HCT116 (cell line): ENCODE measurements at regions of chr10 and their contacts with region 1.

Region 1: GRCh38 chr10:89773081-89773480 is 71.7 kb downstream of the KIF20B start:
- DNase-seq: no peak
- ATAC-seq: no peak
- H3K4me3 ChIP-seq: no peak overlapping the region
- H3K27ac ChIP-seq: no peak overlapping the region
- H3K4me1 ChIP-seq: no peaks in the 10 kb centered on the region
- H3K27me3 ChIP-seq: no peaks in the 10 kb centered on the region
- CTCF ChIP-seq: no peak
- POLR2A ChIP-seq: no peak
- RAD21 ChIP-seq: no peak

Region 2: GRCh38 chr10:89710753-89711152 is 62.3 kb before region 1 on chr10:
- CTCF ChIA-PET with region 1: no interaction called
- POLR2A ChIA-PET with region 1: no interaction called
- RAD21 ChIA-PET with region 1: no interaction called
- intact Hi-C with region 1: loop called (anchors 10 kb)
- DNase-seq: no peak
- ATAC-seq: no peak
- H3K4me3 ChIP-seq: no peak overlapping the region
- H3K27ac ChIP-seq: no peak overlapping the region
- H3K4me1 ChIP-seq: no peaks in the 10 kb centered on the region
- H3K27me3 ChIP-seq: no peaks in the 10 kb centered on the region
- CTCF ChIP-seq: no peak
- POLR2A ChIP-seq: no peak
- RAD21 ChIP-seq: no peak

Region 3: DNA sequence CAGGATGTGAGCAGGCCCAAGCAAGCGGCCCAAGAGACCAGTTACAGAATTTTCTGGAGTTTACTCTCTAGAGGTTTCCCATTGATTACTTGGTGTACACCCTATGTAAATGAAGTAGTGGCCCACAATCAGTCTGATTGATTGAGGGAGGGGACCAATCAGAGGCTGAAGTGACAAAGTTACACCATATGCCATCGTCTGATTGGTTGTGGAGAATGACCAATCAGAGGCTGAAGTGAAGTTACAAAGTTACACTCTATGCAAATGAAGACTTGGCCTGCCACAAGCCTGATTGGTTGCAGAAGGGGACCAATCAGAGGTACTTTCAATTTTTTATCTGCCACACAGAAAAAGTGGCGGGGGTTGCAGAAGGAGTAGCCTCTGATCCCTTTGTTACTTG is 12.0 kb after region 1 on chr10:
- CTCF ChIA-PET with region 1: no interaction called
- POLR2A ChIA-PET with region 1: no interaction called
- RAD21 ChIA-PET with region 1: no interaction called
- intact Hi-C with region 1: no loop called
- DNase-seq: no peak
- ATAC-seq: peak; percentile 52
- H3K4me3 ChIP-seq: no peak overlapping the region
- H3K27ac ChIP-seq: no peak overlapping the region
- H3K4me1 ChIP-seq: peaks cover 2 to 9% of the 10 kb centered on the region in 2 experiments; a peak in 2 of 4 replicates
- H3K27me3 ChIP-seq: no peaks in the 10 kb centered on the region
- CTCF ChIP-seq: no peak
- POLR2A ChIP-seq: no peak
- RAD21 ChIP-seq: no peak